ENCODE measurements at regions of chr21 and their contacts with region 1.

Region 1: DNA sequence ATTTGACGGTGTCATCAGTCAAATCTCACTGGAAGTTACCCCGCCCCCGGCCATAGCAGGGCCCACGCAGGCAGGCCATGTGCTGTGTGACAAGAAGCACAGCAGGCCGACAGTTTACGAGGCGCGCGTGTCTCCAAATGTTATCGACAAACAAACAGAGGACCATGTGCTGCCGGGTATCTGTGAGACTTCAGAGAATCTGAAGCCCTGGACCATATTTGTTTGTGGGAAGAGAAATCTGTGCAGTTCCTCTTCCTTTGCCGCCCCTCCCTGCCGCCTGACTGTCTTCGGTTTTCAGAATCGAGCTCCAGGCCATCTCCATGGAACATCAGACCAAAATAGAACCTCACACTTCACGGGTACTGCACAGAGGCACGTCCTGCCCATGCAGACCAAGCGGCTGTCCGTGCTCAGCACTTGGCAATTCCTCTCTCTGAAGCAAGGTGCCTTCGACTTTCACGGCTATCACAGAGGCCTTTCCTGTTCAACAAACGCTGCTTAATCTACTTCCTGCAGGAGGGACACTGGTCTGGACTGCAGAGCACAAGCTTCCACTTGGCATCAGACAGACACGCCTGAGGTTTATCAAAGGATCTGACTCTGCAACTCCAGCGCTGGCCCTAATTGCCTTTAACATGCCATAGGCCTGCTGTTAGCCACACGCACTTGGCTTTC is 135.7 kb upstream of the KRTAP19-8 start:
- DNase-seq: peak; percentile 54
- H3K4me3 ChIP-seq: no peak overlapping the region
- CTCF ChIP-seq: no peak

Region 2: DNA sequence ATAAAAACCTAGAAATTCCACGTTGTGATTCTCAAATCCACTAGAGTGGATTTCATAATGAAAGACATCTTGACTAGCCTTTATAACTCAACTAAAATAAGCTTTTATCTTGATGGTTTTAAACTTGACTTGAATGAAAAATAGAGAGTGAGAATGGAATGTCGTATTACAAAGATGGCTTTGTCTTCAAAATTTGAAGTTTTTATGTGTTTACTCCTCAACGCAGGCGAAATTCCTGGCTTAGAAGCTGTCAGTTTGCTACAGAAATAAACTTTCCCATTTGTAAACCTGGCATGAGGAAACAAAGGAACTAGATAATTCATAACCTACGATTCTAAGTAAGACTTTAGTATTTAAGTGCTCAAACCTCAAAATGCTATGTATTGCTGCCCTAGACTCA is 45.8 kb before region 1 on chr21:
- in situ Hi-C with region 1: loop called (anchors 5 kb)
- DNase-seq: no peak
- H3K4me3 ChIP-seq: no peak overlapping the region
- CTCF ChIP-seq: no peak

Region 3: GRCh38 chr21:31218830-31219608 is 45.0 kb after region 1 on chr21:
- in situ Hi-C with region 1: no loop called
- DNase-seq: peak; percentile 11
- H3K4me3 ChIP-seq: peak overlapping the region; percentile 18
- CTCF ChIP-seq: no peak

Measured in astrocyte of the cerebellum (primary cell).